Esophagus muscularis mucosa (tissue), 4 donors: ENCODE measurements at regions of chr16 and their contacts with region 1.

Region 1: DNA sequence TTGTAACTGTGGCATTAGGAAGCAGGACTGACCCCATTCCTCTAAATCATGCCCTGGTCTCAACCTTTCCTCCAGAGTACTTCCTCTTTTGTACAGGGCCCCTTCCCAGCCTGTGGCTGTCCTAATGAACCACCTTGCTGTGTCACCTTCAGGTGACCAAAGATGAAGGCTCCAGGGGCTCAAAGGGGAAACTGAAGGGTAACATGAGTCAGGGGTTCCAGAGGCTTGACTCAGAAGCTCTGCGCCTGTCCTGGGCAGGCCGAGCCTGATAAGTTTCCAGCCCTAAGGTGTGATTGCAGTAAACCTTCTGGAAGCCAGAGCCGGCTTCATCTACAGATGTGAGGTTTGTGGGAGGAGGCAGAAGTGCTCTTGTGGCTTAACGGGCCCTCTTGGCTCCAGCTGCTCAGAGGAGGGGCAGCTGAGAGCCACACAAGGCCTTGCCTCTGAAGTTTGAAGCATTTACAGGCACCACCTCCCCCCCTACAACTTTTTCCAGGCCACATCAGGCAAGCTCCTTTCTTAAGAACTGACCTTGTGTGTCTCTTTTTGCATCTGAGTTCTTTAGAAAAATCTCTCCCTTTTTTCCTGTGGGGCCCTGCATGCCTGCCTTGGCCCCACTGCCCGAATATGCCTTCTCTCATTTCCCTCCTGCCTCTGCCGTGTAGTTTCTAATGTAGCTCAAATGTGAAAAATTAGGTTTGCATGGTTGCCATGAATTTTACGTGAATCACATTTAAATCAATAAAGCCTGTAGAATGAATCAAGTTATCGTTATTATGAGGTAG is 149.9 kb downstream of the CLEC16A start:
- DNase-seq: no peak
- H3K4me3 ChIP-seq: no peak overlapping the region
- H3K27ac ChIP-seq: peak overlapping the region; percentile 56 to 75 (median 62)
- H3K4me1 ChIP-seq: peaks cover 0 to 45% (median 35%) of the 10 kb centered on the region in 4 donors
- H3K27me3 ChIP-seq: no peaks in the 10 kb centered on the region
- CTCF ChIP-seq: no peak
- EP300 ChIP-seq: no peak
- POLR2A ChIP-seq: no peak

Region 2: DNA sequence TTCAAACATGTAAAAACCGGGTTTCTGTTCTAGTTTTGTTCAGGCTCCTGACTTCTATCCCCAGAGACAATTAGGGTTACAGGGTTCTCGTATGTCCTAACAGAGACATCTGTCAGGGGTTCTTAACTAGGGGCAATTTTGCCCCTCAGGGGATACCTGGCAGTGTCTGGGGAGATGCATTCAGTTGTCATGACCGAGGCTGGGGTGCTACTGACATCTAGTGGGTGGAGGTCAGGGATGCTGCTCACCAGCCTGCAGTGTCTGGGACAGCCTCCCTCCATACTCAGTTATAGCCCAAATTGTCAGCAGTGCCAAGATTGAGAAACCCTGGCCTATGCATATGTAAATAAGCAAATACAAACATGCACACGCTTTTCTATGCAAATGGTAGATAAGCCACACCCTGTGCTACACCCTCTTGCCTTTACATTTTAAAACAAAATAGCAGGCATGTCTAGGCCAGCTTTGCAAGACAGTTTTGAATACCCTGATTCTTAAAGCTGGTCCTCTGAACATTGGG is 112.5 kb before region 1 on chr16:
- intact Hi-C with region 1: loop called (anchors 10 kb)
- DNase-seq: no peak
- H3K4me3 ChIP-seq: no peak overlapping the region
- H3K27ac ChIP-seq: peak overlapping the region in 1 of 4 donors; percentile 84
- H3K4me1 ChIP-seq: peaks cover 6 to 39% (median 25%) of the 10 kb centered on the region in 4 donors
- H3K27me3 ChIP-seq: no peaks in the 10 kb centered on the region
- CTCF ChIP-seq: peak in 1 of 3 experiments; percentile 7
- EP300 ChIP-seq: no peak
- POLR2A ChIP-seq: no peak

Region 3: GRCh38 chr16:11133344-11133943 is 39.2 kb after region 1 on chr16:
- intact Hi-C with region 1: loop called (anchors 5 kb)
- DNase-seq: no peak
- H3K4me3 ChIP-seq: no peak overlapping the region
- H3K27ac ChIP-seq: peak overlapping the region; percentile 56 to 79 (median 76)
- H3K4me1 ChIP-seq: peaks cover 57 to 67% (median 65%) of the 10 kb centered on the region in 4 donors
- H3K27me3 ChIP-seq: no peaks in the 10 kb centered on the region
- CTCF ChIP-seq: peak in 1 of 3 experiments; percentile 7
- EP300 ChIP-seq: no peak
- POLR2A ChIP-seq: no peak

Region 4: GRCh38 chr16:11143372-11144035 is 49.2 kb after region 1 on chr16:
- intact Hi-C with region 1: no loop called
- DNase-seq: no peak
- H3K4me3 ChIP-seq: no peak overlapping the region
- H3K27ac ChIP-seq: no peak overlapping the region
- H3K4me1 ChIP-seq: peaks cover 32 to 55% (median 50%) of the 10 kb centered on the region in 4 donors
- H3K27me3 ChIP-seq: no peaks in the 10 kb centered on the region
- CTCF ChIP-seq: no peak
- EP300 ChIP-seq: no peak
- POLR2A ChIP-seq: no peak